ENCODE measurements at regions of chr12 and their contacts with region 1.

Region 1: DNA sequence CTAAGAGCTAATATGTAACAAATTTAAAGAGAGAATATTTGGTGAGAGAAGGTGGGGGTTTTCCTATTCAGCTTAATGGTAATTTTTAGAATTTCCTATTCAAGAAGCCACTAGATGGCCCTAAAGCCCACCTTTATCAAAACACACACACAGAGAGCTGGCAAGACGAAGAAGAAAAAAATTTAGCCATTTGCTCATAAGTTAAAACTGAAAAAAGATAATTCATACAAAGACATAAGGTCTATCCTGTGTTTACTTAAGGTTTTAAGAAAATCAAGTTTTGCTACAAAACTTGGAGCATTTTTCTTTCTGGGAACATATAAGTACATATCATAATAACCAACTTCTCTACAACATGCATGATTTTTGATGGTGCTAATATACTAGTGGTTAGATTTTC is 46.8 kb upstream of the PCED1B start:
- DNase-seq: peak; percentile 36
- ATAC-seq: peak; percentile 77
- H3K4me3 ChIP-seq: no peak overlapping the region
- H3K27ac ChIP-seq: no peak overlapping the region
- H3K4me1 ChIP-seq: peaks cover 3 to 6% of the 10 kb centered on the region in 2 experiments; a peak in 3 of 4 replicates
- H3K27me3 ChIP-seq: no peaks in the 10 kb centered on the region
- CTCF ChIP-seq: peak; percentile 38 to 89 (median 66); a peak in 5 of 6 replicates
- POLR2A ChIP-seq: no peak
- RAD21 ChIP-seq: peak; percentile 85

Region 2: DNA sequence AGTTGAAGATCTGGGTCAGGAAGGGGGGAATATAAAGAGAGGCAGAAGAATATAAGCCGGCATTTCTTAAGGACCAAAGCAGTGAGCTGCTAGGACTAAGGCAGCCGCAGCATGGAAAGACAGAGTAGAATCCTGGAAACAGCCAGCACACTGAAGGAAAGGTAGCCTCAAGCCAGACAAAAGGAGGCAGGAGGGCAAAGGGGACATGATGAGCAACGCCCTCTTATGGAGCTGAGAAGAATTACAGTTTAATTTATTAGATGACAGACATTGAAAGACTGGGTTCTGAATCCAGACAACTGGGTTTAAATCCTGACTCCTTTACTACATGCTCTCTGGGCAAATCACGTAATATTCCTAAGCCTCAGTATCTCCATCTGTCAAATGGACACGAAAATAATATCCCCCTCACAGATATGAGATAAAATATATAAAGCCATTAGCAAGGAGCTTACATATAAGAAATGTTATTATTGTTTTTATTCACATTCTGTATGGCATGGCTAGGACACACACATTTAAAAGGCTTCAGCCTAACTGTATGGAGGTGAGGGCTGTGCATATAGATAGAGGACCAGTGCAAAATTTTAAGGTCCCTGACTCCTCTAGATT is 38.7 kb after region 1 on chr12:
- CTCF ChIA-PET with region 1: interaction called, 16 read pairs
- POLR2A ChIA-PET with region 1: no interaction called
- RAD21 ChIA-PET with region 1: interaction called in 1 of 2 experiments, 3 read pairs
- intact Hi-C with region 1: no loop called
- DNase-seq: no peak
- ATAC-seq: peak; percentile 76
- H3K4me3 ChIP-seq: no peak overlapping the region
- H3K27ac ChIP-seq: no peak overlapping the region
- H3K4me1 ChIP-seq: no peaks in the 10 kb centered on the region
- H3K27me3 ChIP-seq: no peaks in the 10 kb centered on the region
- CTCF ChIP-seq: peak; percentile 37 to 69 (median 65); a peak in 5 of 6 replicates
- POLR2A ChIP-seq: no peak
- RAD21 ChIP-seq: peak; percentile 57

Region 3: DNA sequence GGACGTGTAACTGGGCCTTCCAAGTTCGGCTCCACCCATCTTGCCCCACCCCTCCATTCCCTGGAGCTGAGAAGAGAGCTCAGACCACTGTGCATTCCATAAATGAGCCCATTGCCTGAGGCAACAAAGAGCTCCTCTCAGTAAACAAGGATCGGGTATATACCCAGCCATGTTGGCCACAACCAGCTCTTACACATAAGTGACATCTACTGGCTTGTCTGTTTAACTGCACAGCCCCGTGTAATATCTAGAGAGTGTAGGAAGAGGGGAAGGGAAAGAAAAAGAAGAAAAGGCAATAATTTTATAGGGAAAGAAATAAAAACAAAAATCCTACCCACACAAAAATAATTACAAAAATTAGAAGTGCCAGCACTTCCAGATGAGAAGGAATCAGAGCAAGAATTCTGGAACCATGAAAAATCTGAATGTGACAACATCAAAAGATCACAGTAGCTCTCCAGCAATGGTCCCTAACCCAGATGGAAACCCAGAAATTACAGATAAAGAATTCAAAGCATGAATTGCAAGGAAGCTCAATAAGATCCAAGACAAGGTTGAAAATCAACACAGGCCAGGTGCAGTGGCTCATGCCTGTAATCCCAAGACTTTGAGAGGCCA is 365.1 kb after region 1 on chr12:
- CTCF ChIA-PET with region 1: interaction called, 57 read pairs
- POLR2A ChIA-PET with region 1: no interaction called
- RAD21 ChIA-PET with region 1: interaction called, 6 to 10 read pairs
- intact Hi-C with region 1: loop called (anchors 1 kb)
- DNase-seq: peak; percentile 34
- ATAC-seq: peak; percentile 99
- H3K4me3 ChIP-seq: no peak overlapping the region
- H3K27ac ChIP-seq: no peak overlapping the region
- H3K4me1 ChIP-seq: no peaks in the 10 kb centered on the region
- H3K27me3 ChIP-seq: no peaks in the 10 kb centered on the region
- CTCF ChIP-seq: peak; percentile 54 to 63 (median 54); a peak in 5 of 6 replicates
- POLR2A ChIP-seq: no peak
- RAD21 ChIP-seq: peak; percentile 81

Region 4: DNA sequence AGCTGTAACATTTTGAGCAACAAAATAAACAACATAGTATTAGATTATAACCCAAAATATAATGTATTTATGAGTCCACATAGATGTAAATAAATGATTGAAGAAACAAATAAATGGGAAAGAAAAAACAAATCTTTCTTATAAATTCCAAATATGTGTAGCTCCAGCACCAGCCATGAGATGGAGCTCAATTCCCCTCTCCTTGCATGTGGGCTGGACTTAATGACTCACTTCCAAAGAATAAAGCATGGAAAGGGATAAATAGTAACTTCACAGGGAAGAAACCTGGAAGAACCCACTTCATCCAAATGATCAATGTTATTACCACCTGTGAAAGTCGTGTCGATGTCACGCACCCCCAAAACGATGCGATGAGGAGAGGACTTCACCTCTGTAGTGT is 514.4 kb after region 1 on chr12:
- CTCF ChIA-PET with region 1: interaction called, 8 read pairs
- POLR2A ChIA-PET with region 1: no interaction called
- RAD21 ChIA-PET with region 1: no interaction called
- intact Hi-C with region 1: loop called (anchors 5 kb)
- DNase-seq: no peak
- ATAC-seq: peak; percentile 82
- H3K4me3 ChIP-seq: no peak overlapping the region
- H3K27ac ChIP-seq: no peak overlapping the region
- H3K4me1 ChIP-seq: no peaks in the 10 kb centered on the region
- H3K27me3 ChIP-seq: no peaks in the 10 kb centered on the region
- CTCF ChIP-seq: peak; percentile 49 to 58 (median 57); a peak in 5 of 6 replicates
- POLR2A ChIP-seq: no peak
- RAD21 ChIP-seq: peak; percentile 64

Region 5: DNA sequence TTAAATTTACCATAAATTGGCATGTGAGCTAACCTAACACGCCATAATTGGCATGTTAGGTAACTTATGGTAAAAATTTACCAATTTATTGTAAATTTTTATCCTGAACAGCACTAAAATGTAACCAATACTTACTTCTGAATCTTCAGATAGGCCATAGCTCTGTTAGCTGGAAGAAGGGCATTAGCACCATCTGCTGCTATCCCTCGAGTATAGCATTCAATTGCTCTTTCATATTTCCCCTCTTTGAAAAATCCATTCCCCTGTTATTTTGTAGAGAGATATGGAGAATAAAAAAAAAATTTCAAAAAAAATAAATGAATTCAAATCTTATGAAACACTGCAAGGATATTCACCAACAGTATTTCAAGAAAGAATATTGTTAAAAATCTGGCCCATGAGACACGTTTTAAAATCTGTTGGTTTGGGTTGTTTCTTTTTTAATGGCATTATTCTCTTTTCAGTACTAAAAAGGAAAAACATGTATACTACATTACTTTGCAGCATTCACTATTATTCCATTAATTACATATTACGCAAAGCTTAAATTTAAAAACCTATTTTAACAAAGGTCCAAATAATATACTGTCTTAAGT is 654.1 kb after region 1 on chr12:
- CTCF ChIA-PET with region 1: interaction called, 22 read pairs
- POLR2A ChIA-PET with region 1: no interaction called
- RAD21 ChIA-PET with region 1: interaction called in 1 of 2 experiments, 3 read pairs
- intact Hi-C with region 1: loop called (anchors 1 kb)
- DNase-seq: peak; percentile 18
- ATAC-seq: peak; percentile 75
- H3K4me3 ChIP-seq: no peak overlapping the region
- H3K27ac ChIP-seq: no peak overlapping the region
- H3K4me1 ChIP-seq: no peaks in the 10 kb centered on the region
- H3K27me3 ChIP-seq: no peaks in the 10 kb centered on the region
- CTCF ChIP-seq: peak; percentile 62 to 66 (median 63); a peak in 5 of 6 replicates
- POLR2A ChIP-seq: no peak
- RAD21 ChIP-seq: peak; percentile 73

Region 6: GRCh38 chr12:47779301-47779942 is 746.8 kb after region 1 on chr12:
- CTCF ChIA-PET with region 1: no interaction called
- POLR2A ChIA-PET with region 1: no interaction called
- RAD21 ChIA-PET with region 1: no interaction called
- intact Hi-C with region 1: loop called (anchors 10 kb)
- DNase-seq: peak; percentile 61
- ATAC-seq: peak; percentile 89
- H3K4me3 ChIP-seq: no peak overlapping the region
- H3K27ac ChIP-seq: no peak overlapping the region
- H3K4me1 ChIP-seq: peaks cover 17 to 39% of the 10 kb centered on the region in 2 experiments
- H3K27me3 ChIP-seq: no peaks in the 10 kb centered on the region
- CTCF ChIP-seq: peak; percentile 91 to 97 (median 94)
- POLR2A ChIP-seq: no peak
- RAD21 ChIP-seq: peak; percentile 94